ENCODE measurements at regions of chr3 and their contacts with region 1.

Region 1: DNA sequence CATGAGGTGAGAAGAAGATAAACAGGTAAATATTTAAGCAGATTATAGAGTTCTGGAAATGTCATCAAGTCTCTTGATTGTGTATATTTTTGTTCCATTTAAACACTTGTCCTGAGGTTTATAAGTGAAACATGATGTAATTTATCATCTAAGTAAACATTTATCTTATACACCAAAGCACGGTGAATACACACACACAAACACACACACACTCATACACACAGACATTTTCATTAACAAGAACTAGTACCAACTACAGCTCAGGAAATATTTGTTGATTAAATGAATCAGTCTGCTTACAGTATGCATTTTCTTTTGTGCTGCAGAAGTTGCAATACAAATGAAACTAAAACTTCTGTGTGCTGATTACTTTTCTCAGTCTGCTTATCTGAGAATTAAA is 357.3 kb downstream of the ZBTB20 start:
- DNase-seq: no peak
- H3K4me3 ChIP-seq: no peak overlapping the region
- H3K27ac ChIP-seq: no peak overlapping the region
- H3K4me1 ChIP-seq: no peaks in the 10 kb centered on the region
- H3K27me3 ChIP-seq: no peaks in the 10 kb centered on the region
- CTCF ChIP-seq: no peak
- POLR2A ChIP-seq: no peak

Region 2: DNA sequence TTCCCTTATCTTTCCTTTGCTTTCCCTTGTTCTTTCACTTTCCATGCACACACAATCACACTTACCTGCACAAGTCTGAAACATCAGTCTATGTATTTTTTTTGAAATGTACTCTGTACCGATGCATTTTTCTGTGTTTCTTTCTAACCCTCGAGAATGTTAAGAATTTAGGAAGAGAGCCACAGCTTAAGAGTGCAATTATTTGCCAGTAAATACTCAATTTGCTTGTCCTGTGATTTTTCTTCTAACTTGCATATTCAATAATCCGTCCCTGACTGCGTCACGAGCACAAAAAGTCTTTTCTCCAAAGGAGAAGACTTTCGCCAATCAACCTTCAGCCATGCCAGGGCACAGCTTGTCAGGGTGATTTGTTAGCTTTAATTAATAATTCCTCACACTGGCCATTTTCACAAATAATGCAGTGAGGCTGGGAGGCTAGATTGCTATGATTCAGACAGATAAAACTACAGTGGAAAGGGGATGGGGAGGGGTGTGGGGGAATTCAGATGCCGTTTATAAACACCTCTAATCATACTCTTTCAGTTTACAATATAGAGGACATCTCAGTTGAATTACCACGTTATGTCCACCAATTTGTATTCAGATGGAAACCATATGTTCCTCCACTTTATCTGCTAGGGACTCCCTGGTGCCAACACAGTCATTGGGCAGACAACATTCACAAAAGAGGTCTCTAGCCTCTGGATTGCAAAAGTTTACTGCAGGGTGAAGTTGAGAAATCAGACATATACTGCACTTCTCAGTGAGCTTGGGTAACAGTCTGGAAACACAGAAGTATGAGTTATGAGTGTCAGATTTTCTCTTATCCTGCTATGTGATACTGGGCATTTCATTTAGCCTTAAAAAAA is 30.7 kb before region 1 on chr3:
- intact Hi-C with region 1: loop called (anchors 2 kb)
- DNase-seq: no peak
- H3K4me3 ChIP-seq: peak overlapping the region; percentile 35 to 56 (median 48)
- H3K27ac ChIP-seq: peak overlapping the region; percentile 61 to 74
- H3K4me1 ChIP-seq: no peaks in the 10 kb centered on the region
- H3K27me3 ChIP-seq: no peaks in the 10 kb centered on the region
- CTCF ChIP-seq: no peak
- POLR2A ChIP-seq: no peak

Region 3: DNA sequence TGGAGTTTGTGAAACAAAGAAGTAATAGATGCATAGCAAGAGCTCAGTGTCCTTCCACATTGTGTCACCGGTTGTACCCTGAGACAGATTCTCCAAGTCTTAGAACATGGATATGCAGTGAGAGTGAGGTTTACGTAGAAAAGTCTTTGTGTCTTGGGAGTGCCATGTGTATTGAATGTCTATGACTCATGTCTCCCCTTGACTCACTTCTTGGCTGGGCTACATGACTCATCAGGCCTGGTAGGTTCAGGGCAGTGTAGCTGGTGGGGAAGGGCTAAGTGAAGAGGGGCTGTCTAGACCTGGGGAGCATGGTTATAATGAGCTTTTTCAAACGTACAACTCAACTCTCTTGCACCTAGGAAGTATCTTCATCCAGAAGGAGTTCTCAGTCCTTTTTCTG is 1001.0 kb after region 1 on chr3:
- intact Hi-C with region 1: no loop called
- DNase-seq: no peak
- H3K4me3 ChIP-seq: no peak overlapping the region
- H3K27ac ChIP-seq: no peak overlapping the region
- H3K4me1 ChIP-seq: no peaks in the 10 kb centered on the region
- H3K27me3 ChIP-seq: no peaks in the 10 kb centered on the region
- CTCF ChIP-seq: no peak
- POLR2A ChIP-seq: no peak